HEK293 (cell line): ENCODE measurements at regions of chr7 and their contacts with region 1.

Region 1: DNA sequence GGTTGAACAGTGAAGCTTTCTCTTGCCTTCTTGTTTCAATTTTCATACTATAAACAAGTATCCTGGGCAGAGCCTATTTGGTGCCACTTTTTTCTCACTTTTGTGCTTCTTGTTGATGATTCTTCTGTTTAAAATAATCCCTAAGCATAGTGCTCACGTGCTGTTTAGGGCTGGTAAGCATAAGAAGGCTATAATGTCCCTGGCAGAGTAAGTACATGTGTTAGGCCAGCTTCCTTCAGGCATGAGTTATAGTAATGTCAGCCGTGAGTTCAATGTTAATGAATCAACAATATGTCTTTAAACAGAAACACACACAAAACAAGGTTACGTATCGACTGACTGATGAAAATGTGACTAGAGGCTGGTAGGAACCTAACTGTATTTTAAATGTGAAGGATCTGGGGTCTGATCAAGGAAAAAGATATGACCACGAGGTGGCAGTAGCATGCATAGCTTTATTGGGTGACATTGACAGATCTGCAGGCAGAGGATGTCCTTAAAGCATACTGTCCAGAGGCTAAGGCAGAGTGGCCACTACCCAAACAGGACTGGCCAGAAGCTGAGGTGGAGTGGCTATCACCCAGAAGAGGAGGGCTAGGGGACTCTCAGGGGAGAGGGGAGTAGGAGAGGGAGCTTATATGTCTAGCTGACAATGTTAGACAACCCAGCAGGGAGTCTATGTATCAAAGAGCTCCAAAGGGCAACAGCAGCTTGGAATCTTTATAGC is 113.7 kb downstream of the BRAF start:
- H3K4me3 ChIP-seq: no peak overlapping the region
- H3K27ac ChIP-seq: no peak overlapping the region
- H3K4me1 ChIP-seq: no peaks in the 10 kb centered on the region
- CTCF ChIP-seq: peak; percentile 67

Region 2: DNA sequence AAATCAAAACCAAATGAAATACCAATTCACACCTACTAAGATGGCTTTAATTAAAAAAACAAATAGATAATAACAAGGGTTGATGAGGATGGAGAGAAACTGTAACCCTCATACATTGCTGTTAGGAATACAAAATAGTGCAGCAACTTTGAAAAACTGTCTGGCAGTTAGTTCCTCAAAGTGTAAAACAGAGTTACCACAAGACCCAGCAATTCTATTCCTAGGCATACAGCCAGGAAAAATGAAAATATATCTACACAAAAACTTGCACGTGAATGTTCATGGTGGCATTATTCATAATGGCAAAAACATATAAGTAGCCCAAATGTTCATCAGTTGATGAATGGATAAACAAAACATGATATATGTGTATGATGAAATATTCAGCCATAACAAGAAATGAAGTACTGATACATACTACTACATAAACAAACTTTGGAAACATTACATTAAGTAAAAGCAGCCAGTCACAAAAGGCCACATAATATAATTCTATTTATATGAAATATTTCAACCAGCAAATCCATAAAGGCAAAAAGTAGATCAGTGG is 30.2 kb after region 1 on chr7:
- CTCF ChIA-PET with region 1: interaction called, 10 read pairs
- POLR2A ChIA-PET with region 1: no interaction called
- H3K4me3 ChIP-seq: no peak overlapping the region
- H3K27ac ChIP-seq: no peak overlapping the region
- H3K4me1 ChIP-seq: no peaks in the 10 kb centered on the region
- CTCF ChIP-seq: no peak

Region 3: DNA sequence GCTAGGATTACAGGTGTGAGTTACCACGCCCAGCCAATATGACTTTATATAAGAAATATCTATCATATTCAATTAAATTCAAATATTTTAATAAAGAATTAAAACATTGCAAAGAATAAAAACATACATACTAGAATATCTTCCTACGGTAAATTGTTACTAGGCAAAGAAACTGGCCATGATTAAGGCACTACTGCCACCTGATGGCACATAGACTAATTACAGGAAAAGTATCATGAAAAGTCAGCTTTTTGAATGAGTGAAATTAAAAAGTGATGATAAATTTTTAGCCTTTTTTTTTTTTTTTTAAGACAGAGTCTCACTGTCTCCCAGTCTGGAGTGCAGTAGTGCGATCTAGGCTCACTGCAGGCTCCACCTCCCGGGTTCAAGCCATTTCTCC is 172.8 kb after region 1 on chr7:
- CTCF ChIA-PET with region 1: interaction called, 23 read pairs
- POLR2A ChIA-PET with region 1: no interaction called
- H3K4me3 ChIP-seq: no peak overlapping the region
- H3K27ac ChIP-seq: no peak overlapping the region
- H3K4me1 ChIP-seq: no peaks in the 10 kb centered on the region
- CTCF ChIP-seq: no peak

Region 4: GRCh38 chr7:141014524-141015395 is 203.8 kb after region 1 on chr7 and contains the start of gene MRPS33:
- CTCF ChIA-PET with region 1: interaction called, 34 read pairs
- POLR2A ChIA-PET with region 1: interaction called, 5 read pairs
- H3K4me3 ChIP-seq: peak within 1 kb of the TSS; percentile 89
- H3K27ac ChIP-seq: no peak within 1 kb of the TSS; the same call in 1 of the 2 replicates
- H3K4me1 ChIP-seq: no peaks in the 10 kb centered on the region; the same call in 1 of the 2 replicates
- CTCF ChIP-seq: peak; percentile 98

Region 5: GRCh38 chr7:141654551-141654950 is 843.6 kb after region 1 on chr7:
- CTCF ChIA-PET with region 1: interaction called, 10 read pairs
- POLR2A ChIA-PET with region 1: no interaction called
- H3K4me3 ChIP-seq: no peak overlapping the region
- H3K27ac ChIP-seq: no peak overlapping the region
- H3K4me1 ChIP-seq: no peaks in the 10 kb centered on the region
- CTCF ChIP-seq: peak; percentile 69